Activated CD8-positive, alpha-beta T cell treated with anti-CD3 and anti-CD28 coated beads for 36 hours (primary cell): ENCODE measurements at regions of chr6 and their contacts with region 1.

Region 1: DNA sequence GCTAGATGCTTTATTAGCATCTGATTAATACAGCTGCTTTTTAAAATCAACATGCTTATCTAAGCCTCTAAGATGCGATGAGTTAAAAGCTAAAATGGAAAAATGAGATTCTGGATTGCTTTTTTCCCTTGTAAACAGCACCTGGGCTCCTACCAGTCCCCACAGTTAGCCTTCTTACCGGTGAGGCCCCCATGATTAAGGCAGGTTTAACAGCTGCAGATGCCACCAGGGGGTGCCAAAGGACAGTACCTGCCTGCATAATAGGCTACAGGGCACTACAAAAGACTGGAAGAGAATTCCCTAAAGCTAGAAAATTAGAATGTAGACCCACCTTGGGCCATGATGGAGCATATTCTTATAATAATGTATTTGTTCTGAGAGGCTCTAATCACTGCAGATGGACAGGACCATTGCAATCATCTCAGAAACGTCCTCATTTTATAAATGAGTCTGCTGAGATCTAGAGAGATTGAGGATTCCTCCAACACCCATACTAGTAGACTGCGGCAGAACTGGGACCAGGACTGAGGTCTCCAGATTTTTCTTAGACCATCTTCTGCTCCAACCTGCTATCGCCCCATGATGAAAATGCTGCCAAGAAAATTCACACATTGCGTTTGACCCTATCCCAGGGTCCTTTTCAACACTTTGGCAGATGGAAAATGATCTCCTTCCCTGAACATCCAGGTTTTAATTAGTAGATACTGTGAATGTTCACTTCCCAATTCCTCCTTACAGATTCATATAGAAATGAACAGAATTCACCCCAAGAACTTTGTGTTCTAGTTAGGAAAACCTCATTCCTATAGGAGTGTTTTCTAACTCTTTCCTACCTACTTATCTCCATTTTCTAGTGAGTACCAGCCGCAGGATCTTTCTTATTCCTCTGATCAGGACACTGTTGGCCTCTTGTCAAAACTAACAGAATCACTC is 148.8 kb downstream of the RPS12 start:
- DNase-seq: peak; percentile 79
- ATAC-seq: peak; percentile 71
- H3K4me3 Mint-ChIP-seq: no peak overlapping the region
- H3K27ac Mint-ChIP-seq: no peak overlapping the region
- H3K4me1 Mint-ChIP-seq: no peaks in the 10 kb centered on the region
- H3K27me3 Mint-ChIP-seq: peaks cover 17% of the 10 kb centered on the region
- CTCF ChIP-seq: peak; percentile 78

Region 2: DNA sequence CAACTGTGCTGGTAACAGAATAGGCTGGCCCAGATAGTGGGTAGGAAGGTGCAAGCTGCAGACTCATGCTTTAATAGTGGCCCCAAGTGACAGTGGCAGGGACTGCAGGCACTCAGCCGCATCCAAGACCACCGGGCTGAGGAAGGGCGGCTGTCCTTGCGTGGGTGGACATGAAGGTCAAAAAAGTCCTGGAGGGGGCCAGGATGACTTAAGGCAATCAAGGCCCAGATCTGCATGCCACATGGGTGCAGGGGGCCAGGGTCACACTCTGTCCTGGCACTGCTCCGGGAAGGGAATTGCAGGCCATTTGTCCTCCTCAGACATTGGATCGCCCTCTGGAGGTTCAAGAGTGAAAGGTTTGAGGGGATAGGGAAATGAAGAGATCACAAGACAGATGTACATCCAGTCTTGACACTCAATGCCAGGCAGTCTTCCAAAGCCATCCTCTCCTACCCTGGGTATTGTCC is 195.1 kb before region 1 on chr6:
- CTCF ChIA-PET with region 1: no interaction called
- POLR2A ChIA-PET with region 1: no interaction called
- intact Hi-C with region 1: no loop called
- DNase-seq: peak; percentile 61
- ATAC-seq: peak; percentile 79
- H3K4me3 Mint-ChIP-seq: no peak overlapping the region
- H3K27ac Mint-ChIP-seq: no peak overlapping the region
- H3K4me1 Mint-ChIP-seq: peaks cover 19% of the 10 kb centered on the region
- H3K27me3 Mint-ChIP-seq: no peaks in the 10 kb centered on the region
- CTCF ChIP-seq: peak; percentile 72

Region 3: DNA sequence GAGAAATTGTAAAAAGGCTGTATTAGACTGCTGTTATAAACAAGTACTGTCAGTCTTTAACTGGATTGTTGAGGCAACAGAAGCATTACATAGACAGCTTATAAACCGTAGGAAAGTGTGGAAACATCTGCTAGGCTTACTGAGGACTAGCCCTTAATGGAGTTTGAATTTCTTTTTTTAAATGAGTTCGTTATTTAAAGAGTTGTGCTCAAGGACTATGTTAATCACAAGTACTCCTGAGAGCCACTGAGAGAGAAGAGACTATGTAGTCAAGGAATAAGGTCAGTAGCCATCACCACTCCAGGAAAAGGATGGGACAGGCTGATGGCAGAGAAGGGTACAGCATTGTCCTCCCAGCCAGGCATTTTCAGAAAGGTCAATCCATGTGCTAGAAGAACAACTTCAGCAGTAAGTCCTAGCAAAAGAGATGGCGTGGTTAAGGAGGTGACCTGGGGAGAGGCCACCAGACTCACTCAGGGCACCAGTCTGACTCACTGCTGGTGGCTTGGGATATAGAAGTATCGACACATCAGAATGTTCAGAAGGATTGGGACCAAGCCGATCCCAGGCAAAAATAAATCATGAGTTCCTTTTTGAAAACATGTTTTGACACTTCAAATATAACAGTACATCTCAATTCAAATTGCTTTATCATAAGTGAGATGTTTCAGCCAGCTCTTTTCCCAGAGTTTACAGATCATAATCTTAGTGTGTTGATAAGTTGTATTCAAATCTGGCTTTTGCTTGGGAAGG is 142.4 kb before region 1 on chr6:
- CTCF ChIA-PET with region 1: interaction called, 18 read pairs
- POLR2A ChIA-PET with region 1: no interaction called
- intact Hi-C with region 1: loop called (anchors 5 kb)
- DNase-seq: peak; percentile 21
- ATAC-seq: peak; percentile 5
- H3K4me3 Mint-ChIP-seq: no peak overlapping the region
- H3K27ac Mint-ChIP-seq: peak overlapping the region; percentile 53
- H3K4me1 Mint-ChIP-seq: peaks cover 42% of the 10 kb centered on the region
- H3K27me3 Mint-ChIP-seq: no peaks in the 10 kb centered on the region
- CTCF ChIP-seq: no peak

Region 4: DNA sequence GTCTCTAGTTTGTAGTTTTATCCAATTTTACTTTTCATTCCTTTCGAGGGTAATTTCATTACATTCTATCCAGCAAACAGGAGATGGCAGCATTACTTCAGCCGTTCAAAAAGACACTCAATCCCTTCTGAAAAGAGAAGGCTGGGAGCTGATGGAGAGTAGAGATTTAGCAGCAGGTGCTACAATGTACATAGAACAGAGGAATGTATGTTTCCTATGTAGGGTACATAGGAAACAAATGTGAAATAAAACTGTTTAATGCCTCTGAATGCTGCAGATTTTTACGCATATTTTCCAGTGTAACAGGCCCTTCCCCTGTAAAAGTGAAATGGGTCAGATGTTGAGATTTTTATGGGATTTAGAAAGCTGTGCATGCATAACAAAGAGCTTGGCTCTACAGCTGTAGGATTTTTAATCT is 132.9 kb before region 1 on chr6:
- CTCF ChIA-PET with region 1: interaction called, 20 read pairs
- POLR2A ChIA-PET with region 1: no interaction called
- intact Hi-C with region 1: no loop called
- DNase-seq: peak; percentile 12
- ATAC-seq: no peak
- H3K4me3 Mint-ChIP-seq: no peak overlapping the region
- H3K27ac Mint-ChIP-seq: no peak overlapping the region
- H3K4me1 Mint-ChIP-seq: no peaks in the 10 kb centered on the region
- H3K27me3 Mint-ChIP-seq: no peaks in the 10 kb centered on the region
- CTCF ChIP-seq: peak; percentile 55

Region 5: DNA sequence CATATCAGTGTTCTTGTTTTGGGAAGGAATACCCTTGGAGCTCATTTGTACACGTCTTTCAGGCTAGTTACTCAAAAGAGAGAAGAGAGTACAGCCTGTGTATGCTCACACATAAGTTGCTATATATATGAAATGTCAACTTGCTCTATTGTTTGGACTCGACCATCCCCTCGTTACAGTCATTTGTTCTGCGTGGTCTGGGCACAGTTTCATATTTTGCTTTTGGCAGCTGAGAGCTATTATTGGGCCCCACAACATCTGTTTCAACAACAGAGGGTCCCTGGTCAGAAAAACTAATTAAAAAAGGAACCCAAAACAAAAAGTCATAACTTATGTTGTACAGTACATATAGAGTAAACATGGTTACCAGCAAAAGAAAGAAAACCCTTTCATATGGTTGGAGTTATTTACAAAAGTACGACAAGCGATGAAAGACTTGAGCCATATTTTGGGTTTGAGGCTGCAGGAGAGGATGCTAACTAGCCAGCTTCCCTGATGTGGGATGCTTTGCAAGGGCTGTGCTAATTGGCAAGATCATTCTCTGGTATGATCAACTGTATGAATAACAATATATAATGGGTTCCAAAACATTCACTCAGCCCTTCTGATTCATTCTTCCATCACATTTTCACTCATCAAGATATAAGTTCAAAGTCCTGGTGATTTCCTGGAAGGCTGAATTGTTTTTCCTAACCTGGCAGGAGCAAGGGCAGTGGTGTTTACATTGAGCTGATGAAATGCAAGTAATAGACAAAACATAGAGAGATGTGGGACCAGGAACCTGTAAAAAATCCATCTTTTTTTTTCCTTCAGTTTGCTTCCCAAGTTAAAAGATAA is 11.0 kb before region 1 on chr6:
- CTCF ChIA-PET with region 1: interaction called, 11 read pairs
- POLR2A ChIA-PET with region 1: no interaction called
- intact Hi-C with region 1: no loop called
- DNase-seq: no peak
- ATAC-seq: no peak
- H3K4me3 Mint-ChIP-seq: no peak overlapping the region
- H3K27ac Mint-ChIP-seq: no peak overlapping the region
- H3K4me1 Mint-ChIP-seq: no peaks in the 10 kb centered on the region
- H3K27me3 Mint-ChIP-seq: peaks cover 14% of the 10 kb centered on the region
- CTCF ChIP-seq: no peak

Region 6: DNA sequence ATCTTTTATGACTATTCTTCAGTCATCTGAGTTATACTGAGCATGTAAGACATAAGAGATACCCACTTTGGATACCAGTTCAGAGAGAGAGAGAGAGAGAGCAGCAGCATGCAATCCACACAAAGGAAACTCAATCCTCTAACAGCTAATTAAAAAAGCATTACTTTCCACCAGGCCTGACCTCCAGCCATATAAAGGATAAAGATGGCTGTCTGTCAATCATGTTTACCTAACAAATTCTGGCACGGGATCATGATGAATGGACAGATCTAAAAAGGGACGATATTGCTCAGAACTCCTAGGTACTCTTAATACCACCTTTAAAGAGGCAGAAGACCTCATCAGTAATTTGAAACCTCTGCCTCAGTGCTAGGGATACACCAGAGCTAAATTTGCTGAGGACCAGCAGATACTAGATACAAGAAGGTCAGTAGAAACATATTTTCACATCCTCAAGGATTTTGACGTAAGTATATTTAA is 10.4 kb after region 1 on chr6:
- CTCF ChIA-PET with region 1: interaction called, 15 read pairs
- POLR2A ChIA-PET with region 1: no interaction called
- intact Hi-C with region 1: no loop called
- DNase-seq: no peak
- ATAC-seq: no peak
- H3K4me3 Mint-ChIP-seq: no peak overlapping the region
- H3K27ac Mint-ChIP-seq: no peak overlapping the region
- H3K4me1 Mint-ChIP-seq: no peaks in the 10 kb centered on the region
- H3K27me3 Mint-ChIP-seq: peaks cover 12% of the 10 kb centered on the region
- CTCF ChIP-seq: no peak